ENCODE measurements at regions of chr22 and their contacts with region 1.

Region 1: DNA sequence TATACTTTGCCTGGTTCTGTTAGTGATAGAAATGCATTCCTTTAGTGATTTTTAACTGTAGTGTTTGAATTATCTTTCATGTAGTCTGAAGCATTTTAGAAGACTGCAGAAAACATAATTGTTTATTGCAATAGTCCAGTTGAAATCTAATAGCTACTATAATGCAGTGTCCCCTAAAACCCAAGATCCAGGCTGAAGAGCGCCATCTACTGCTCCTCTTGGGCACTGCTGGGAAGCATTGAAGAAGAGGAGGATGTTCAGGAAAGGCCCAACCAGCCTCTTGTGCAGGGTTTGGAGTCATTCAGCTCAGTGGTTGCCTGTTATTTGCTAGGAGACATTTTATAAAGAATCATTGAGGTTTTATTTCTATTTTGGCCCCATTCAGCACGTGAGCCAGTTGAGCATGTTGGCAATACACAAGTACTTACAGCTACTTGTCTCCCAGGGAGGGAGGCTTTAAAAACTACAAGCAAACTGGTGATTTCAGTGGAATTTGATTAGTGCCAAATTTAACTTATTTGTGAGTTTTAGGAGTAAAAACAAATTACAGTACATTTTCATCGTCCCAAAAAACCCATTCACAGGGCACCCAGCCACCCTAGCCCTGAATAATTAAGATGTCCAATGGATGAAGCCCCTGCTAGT is 74.9 kb upstream of the HORMAD2 start:
- DNase-seq: peak; percentile 81
- H3K4me3 ChIP-seq: no peak overlapping the region
- H3K27ac ChIP-seq: no peak overlapping the region
- H3K4me1 ChIP-seq: peaks cover 0 to 18% (median 8%) of the 10 kb centered on the region in 4 donors
- H3K27me3 ChIP-seq: no peaks in the 10 kb centered on the region
- CTCF ChIP-seq: peak; percentile 74 to 96 (median 86)
- EP300 ChIP-seq: no peak
- POLR2A ChIP-seq: no peak

Region 2: GRCh38 chr22:29635734-29636357 is 369.5 kb before region 1 on chr22:
- intact Hi-C with region 1: loop called (anchors 5 kb)
- DNase-seq: no peak
- H3K4me3 ChIP-seq: no peak overlapping the region
- H3K27ac ChIP-seq: no peak overlapping the region
- H3K4me1 ChIP-seq: peaks cover 0 to 22% (median 8%) of the 10 kb centered on the region in 4 donors
- H3K27me3 ChIP-seq: no peaks in the 10 kb centered on the region
- CTCF ChIP-seq: peak in 3 of 4 experiments; percentile 30 to 64 (median 55)
- EP300 ChIP-seq: no peak
- POLR2A ChIP-seq: no peak

Region 3: GRCh38 chr22:29689880-29690213 is 315.5 kb before region 1 on chr22:
- intact Hi-C with region 1: loop called (anchors 5 kb)
- DNase-seq: no peak
- H3K4me3 ChIP-seq: no peak overlapping the region
- H3K27ac ChIP-seq: peak overlapping the region in 3 of 4 donors; percentile 8 to 23 (median 17)
- H3K4me1 ChIP-seq: peaks cover 0 to 28% (median 16%) of the 10 kb centered on the region in 4 donors
- H3K27me3 ChIP-seq: no peaks in the 10 kb centered on the region
- CTCF ChIP-seq: peak; percentile 37 to 64 (median 49)
- EP300 ChIP-seq: no peak
- POLR2A ChIP-seq: no peak

Region 4: GRCh38 chr22:29766632-29767170 is 238.6 kb before region 1 on chr22 and contains the start of gene ZMAT5:
- intact Hi-C with region 1: loop called (anchors 5 kb)
- DNase-seq: peak; percentile 97
- H3K4me3 ChIP-seq: peak within 1 kb of the TSS; percentile 75 to 96 (median 88)
- H3K27ac ChIP-seq: peak within 1 kb of the TSS; percentile 88 to 94 (median 90)
- H3K4me1 ChIP-seq: peaks cover 0 to 33% (median 27%) of the 10 kb centered on the region in 4 donors
- H3K27me3 ChIP-seq: no peaks in the 10 kb centered on the region
- CTCF ChIP-seq: no peak
- EP300 ChIP-seq: no peak
- POLR2A ChIP-seq: peak in 1 of 2 donors; percentile 73
- total RNA-seq, gene ZMAT5: 24.6 to 33.7 (median 30.4) TPM

Region 5: DNA sequence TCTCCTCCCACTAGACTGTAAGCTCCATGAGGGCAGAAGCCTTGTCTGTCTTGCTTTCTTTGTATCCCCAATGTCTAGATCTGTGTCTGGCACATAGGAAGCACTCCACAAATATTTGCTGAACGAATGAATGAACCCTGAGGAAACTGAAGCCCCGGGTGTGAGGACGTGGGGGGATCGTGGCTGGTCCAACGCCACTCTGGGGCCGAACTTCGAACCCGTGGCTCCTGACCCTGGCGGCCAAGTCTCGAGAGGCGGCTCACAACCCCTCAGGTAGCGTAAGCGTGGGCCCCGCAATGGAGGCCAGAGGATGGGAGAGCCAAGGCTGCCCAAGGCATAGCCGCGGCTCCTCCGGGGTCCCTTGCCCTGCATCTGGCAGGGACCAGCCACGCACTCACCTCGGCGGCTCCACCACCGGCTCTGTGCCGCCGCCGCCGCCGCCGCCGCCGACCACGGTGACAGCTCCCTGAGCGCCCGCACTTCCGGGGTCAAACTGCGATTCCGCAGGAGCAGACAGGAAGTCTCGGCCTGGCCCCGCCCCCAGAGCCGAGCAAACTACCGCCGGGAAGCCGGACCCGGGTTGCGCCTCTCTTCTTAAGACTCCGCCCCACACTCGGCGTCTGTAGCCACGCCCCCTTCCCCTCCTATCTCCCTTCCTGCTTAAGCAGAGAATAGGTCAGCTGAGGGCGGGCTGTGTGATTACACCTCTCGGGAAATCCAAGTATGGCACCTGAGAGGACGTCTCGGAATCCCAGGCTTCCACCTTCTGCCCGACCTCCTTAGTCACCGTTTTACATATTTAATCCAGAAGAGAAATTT is 167.3 kb before region 1 on chr22 and contains the start of gene ASCC2:
- intact Hi-C with region 1: loop called (anchors 2 kb)
- DNase-seq: peak; percentile 99
- H3K4me3 ChIP-seq: peak within 1 kb of the TSS; percentile 76 to 98 (median 95)
- H3K27ac ChIP-seq: peak within 1 kb of the TSS; percentile 75 to 86 (median 79)
- H3K4me1 ChIP-seq: peaks cover 0 to 32% (median 21%) of the 10 kb centered on the region in 4 donors
- H3K27me3 ChIP-seq: no peaks in the 10 kb centered on the region
- CTCF ChIP-seq: peak in 1 of 4 experiments; percentile 31
- EP300 ChIP-seq: peak in 1 of 4 donors; percentile 1
- POLR2A ChIP-seq: peak; percentile 32 to 53
- total RNA-seq, gene ASCC2: 15.0 to 37.7 (median 20.5) TPM

Region 6: GRCh38 chr22:29883045-29883774 is 122.1 kb before region 1 on chr22 and contains the start of gene MTMR3:
- intact Hi-C with region 1: loop called (anchors 2 kb)
- DNase-seq: peak; percentile 95
- H3K4me3 ChIP-seq: peak within 1 kb of the TSS; percentile 98 to 100 (median 98)
- H3K27ac ChIP-seq: peak within 1 kb of the TSS; percentile 94 to 99 (median 96)
- H3K4me1 ChIP-seq: peaks cover 0 to 42% (median 38%) of the 10 kb centered on the region in 4 donors
- H3K27me3 ChIP-seq: no peaks in the 10 kb centered on the region
- CTCF ChIP-seq: peak in 3 of 4 experiments; percentile 18 to 62 (median 41)
- EP300 ChIP-seq: no peak
- POLR2A ChIP-seq: peak in 1 of 2 donors; percentile 20
- total RNA-seq, gene MTMR3: 40.7 to 52.3 (median 41.3) TPM

Region 7: DNA sequence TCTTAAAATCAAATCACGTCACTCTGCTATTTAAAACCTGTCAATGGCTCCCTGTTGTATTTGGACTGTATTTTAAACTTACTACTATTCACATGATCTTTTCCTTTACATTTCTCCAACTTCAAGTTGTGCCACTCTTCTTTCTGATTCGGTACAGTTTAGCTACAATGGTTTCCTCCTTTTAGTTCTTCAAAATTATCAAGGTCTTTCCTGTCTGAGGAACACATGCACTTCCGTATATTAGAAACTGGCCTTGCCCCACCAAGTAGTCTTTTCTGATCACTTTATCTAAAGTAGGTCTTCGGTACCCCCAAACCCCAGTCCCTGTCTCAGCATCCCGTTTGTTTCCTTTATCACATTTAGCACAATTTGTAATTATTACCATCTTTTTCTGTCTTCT is 40.6 kb before region 1 on chr22:
- intact Hi-C with region 1: no loop called
- DNase-seq: no peak
- H3K4me3 ChIP-seq: no peak overlapping the region
- H3K27ac ChIP-seq: no peak overlapping the region
- H3K4me1 ChIP-seq: peaks cover 0 to 4% (median 0%) of the 10 kb centered on the region in 4 donors
- H3K27me3 ChIP-seq: no peaks in the 10 kb centered on the region
- CTCF ChIP-seq: no peak
- EP300 ChIP-seq: no peak
- POLR2A ChIP-seq: no peak

Region 8: DNA sequence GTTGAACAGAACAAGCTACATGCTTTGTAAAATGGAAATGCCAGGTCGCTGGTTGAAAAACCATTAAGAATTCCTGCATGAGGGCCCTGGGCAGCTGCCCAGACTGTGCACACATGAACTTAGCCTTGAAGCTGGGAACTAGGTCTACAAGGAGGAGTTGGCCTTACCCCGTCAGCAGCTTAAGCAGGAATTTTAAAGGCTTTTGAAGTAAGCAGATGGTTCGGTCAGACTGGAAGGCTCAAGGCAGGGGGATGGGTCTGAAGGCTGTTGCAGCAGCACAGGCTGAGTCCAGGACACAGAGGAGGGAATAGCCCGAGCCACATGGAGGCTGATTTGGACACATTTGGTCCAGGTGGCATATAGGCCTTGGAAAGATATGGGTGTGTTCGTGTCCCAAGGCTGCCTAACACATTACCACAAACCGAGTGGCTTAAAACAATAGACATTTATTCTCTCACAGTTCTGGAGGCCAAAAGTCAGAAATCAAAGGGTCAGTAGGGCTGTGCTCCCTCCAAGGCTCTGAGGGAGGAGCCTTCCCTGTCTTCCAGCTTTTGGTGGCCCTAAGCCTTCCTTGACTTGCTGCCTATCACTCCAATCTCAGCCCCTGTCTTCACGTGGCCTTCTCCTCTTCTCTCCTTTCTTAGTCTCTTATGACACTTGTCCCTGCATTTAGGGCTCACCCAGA is 229.6 kb after region 1 on chr22:
- intact Hi-C with region 1: no loop called
- DNase-seq: no peak
- H3K4me3 ChIP-seq: no peak overlapping the region
- H3K27ac ChIP-seq: peak overlapping the region in 1 of 4 donors; percentile 2
- H3K4me1 ChIP-seq: peaks cover 0 to 16% (median 15%) of the 10 kb centered on the region in 4 donors
- H3K27me3 ChIP-seq: no peaks in the 10 kb centered on the region
- CTCF ChIP-seq: no peak
- EP300 ChIP-seq: no peak
- POLR2A ChIP-seq: no peak

Measured in sigmoid colon (tissue), 7 donors.